ENCODE measurements at regions of chr4 and their contacts with region 1.

Region 1: DNA sequence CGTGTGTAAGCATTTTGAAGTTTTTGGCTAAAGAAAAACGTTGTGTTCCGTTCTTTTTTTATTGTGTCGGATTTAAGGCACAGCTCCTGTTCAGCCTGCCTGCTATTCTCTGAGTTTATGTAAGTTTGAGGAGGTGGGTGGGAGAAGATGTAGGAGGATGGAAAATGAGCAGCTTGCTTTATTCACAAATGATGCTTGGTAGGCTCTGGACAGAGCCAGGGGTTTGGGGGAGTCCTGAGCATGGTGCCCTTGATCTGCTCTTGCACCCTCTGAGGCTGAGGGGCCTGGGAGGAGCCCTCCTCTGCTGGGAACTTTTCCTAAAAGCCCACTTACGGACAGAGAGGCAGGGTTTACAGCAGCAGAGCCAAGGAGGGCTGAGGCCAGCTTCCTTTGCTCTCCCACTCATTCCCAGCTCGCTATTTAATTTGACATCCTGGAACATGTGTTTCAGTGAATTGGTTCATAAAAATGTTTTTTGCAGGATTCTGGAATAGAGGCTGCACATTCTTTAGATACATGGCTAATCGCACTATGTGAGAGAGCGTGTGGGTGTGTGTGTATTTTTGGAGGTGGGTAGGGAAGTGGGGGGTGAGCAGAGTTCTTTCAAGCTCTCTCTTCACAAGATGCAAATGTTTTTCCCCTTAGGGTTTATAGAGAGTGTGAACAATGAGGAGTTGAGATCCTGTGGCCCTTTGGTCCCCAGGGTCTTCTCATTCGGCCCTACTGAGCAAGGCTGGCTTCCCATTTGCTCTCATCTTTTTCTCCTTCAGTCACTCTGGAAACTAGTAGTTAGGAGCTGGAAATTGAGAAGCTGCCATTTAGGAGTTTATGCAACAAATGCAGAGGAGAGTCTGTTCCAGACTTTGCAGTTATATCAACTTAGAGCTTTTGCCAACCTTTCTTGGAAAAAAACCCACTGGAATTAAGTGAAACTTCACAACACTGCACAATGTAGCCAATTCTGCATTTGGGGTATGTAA is 32.1 kb downstream of the TMEM131L start:
- DNase-seq: peak; percentile 43
- ATAC-seq: peak; percentile 21
- H3K4me3 Mint-ChIP-seq: peak overlapping the region; percentile 75
- H3K27ac Mint-ChIP-seq: peak overlapping the region; percentile 97
- H3K4me1 Mint-ChIP-seq: peaks cover 92% of the 10 kb centered on the region
- H3K27me3 Mint-ChIP-seq: no peaks in the 10 kb centered on the region
- CTCF ChIP-seq: no peak

Region 2: GRCh38 chr4:153521999-153522801 is 23.9 kb after region 1 on chr4:
- CTCF ChIA-PET with region 1: interaction called, 16 read pairs
- POLR2A ChIA-PET with region 1: interaction called, 15 read pairs
- intact Hi-C with region 1: no loop called
- DNase-seq: peak; percentile 90
- ATAC-seq: peak; percentile 82
- H3K4me3 Mint-ChIP-seq: peak overlapping the region; percentile 66
- H3K27ac Mint-ChIP-seq: peak overlapping the region; percentile 96
- H3K4me1 Mint-ChIP-seq: peaks cover 88% of the 10 kb centered on the region
- H3K27me3 Mint-ChIP-seq: no peaks in the 10 kb centered on the region
- CTCF ChIP-seq: no peak

Region 3: DNA sequence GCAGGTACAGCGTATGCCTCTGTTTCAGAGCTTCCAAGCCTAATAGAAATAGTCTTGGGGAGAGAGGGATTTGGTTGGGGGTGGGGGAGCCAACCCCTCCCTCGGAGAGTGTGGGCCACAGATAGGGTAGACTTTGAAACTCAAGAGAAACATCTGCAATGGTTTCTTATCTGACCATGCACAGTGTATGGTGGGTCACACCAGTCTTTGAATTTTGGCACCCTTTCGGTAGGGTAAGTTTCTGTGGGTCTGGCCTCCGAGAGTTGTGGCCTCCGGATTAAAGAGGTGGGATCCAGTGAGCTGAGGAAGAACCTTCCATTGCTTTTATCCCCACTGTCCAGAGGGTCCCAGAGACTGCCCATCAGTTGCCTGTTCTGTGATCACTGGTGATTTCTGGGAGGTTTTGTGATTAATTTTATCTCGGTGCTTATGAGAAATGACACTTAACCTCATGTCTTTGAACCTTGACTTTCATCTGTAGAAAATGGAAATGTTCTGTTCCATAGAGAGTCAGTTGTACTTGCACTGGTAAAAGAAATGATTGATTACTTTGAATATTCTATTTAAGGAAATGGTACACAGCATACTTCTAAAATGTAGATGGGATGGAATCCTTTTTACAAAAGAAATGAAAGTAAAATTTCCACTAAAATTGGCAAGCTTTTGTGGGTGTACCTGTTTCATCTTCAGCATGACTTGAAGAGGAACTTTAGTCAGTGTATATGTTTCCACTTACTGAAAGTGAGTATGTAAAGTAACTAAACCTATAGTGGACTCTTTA is 30.6 kb after region 1 on chr4:
- CTCF ChIA-PET with region 1: interaction called, 16 read pairs
- POLR2A ChIA-PET with region 1: interaction called, 15 read pairs
- intact Hi-C with region 1: loop called (anchors 2 kb)
- DNase-seq: no peak
- ATAC-seq: peak; percentile 73
- H3K4me3 Mint-ChIP-seq: peak overlapping the region; percentile 50
- H3K27ac Mint-ChIP-seq: peak overlapping the region; percentile 96
- H3K4me1 Mint-ChIP-seq: peaks cover 87% of the 10 kb centered on the region
- H3K27me3 Mint-ChIP-seq: no peaks in the 10 kb centered on the region
- CTCF ChIP-seq: no peak

Measured in activated CD8-positive, alpha-beta T cell treated with anti-CD3 and anti-CD28 coated beads for 36 hours (primary cell).